Activated CD8-positive, alpha-beta T cell treated with anti-CD3 and anti-CD28 coated beads for 36 hours (primary cell): ENCODE measurements at regions of chr18 and their contacts with region 1.

Region 1: GRCh38 chr18:77000527-77000926 is 132.1 kb downstream of the MBP start:
- DNase-seq: peak; percentile 49
- ATAC-seq: peak; percentile 61
- H3K4me3 Mint-ChIP-seq: no peak overlapping the region
- H3K27ac Mint-ChIP-seq: no peak overlapping the region
- H3K4me1 Mint-ChIP-seq: peaks cover 19% of the 10 kb centered on the region
- H3K27me3 Mint-ChIP-seq: no peaks in the 10 kb centered on the region
- CTCF ChIP-seq: peak; percentile 99

Region 2: DNA sequence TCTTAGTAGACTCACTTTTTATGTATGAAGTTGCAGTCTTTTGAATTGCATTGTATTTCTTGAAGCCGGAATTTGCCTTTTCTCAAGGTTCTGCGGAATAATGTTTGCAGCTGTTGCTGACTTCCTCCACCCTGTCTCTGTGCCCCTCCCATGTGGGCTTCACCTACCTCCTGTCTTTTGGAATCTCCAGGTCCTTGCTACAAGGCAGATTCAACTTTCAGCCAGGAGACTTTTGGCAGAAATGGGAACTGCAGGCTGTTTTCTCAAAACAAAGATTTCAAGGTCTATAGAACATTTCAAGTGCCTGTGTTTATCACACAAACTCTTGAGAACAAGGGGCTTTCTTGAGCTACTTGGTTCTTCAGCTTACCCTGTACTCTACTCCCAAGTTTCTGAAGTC is 152.6 kb before region 1 on chr18:
- CTCF ChIA-PET with region 1: no interaction called
- POLR2A ChIA-PET with region 1: no interaction called
- intact Hi-C with region 1: no loop called
- DNase-seq: no peak
- ATAC-seq: no peak
- H3K4me3 Mint-ChIP-seq: no peak overlapping the region
- H3K27ac Mint-ChIP-seq: no peak overlapping the region
- H3K4me1 Mint-ChIP-seq: peaks cover 19% of the 10 kb centered on the region
- H3K27me3 Mint-ChIP-seq: no peaks in the 10 kb centered on the region
- CTCF ChIP-seq: no peak

Region 3: DNA sequence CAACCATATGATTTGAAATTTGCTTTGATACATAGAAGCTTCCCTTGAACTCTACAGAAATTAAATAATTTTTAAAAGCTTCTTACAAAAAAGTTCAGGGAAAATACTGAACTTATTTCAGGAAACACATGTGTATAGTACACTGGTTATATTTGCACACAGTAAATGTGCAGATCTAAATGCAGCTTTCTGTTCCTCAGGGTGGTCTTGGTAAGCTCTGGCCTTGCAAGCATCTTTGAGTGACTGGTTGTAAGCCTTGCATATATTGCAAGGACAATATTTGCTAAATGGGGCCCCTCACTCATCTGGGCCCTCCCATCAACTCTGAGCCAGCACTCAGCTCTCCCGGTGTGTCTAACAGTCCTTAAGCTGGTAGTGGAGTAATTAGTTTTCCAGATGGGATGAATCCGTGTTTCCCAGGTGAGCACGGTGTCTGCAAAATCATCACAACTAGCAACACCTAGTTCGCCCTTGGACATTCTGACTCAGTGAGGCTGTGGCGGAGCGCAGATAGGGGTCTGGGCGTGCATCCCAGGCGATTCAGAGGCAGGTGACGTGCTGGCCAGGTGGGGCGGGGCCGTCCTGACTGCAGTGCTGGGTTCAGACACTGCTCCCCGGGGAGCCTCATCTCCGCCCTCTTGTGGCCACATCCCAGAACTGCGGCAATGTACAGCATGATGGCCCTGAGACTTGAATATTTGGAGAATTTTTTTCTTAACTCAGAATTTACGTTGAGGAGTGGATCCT is 17.5 kb before region 1 on chr18:
- CTCF ChIA-PET with region 1: interaction called, 51 read pairs
- POLR2A ChIA-PET with region 1: interaction called, 4 read pairs
- intact Hi-C with region 1: no loop called
- DNase-seq: peak; percentile 95
- ATAC-seq: peak; percentile 100
- H3K4me3 Mint-ChIP-seq: no peak overlapping the region
- H3K27ac Mint-ChIP-seq: no peak overlapping the region
- H3K4me1 Mint-ChIP-seq: peaks cover 6% of the 10 kb centered on the region
- H3K27me3 Mint-ChIP-seq: no peaks in the 10 kb centered on the region
- CTCF ChIP-seq: peak; percentile 87

Region 4: DNA sequence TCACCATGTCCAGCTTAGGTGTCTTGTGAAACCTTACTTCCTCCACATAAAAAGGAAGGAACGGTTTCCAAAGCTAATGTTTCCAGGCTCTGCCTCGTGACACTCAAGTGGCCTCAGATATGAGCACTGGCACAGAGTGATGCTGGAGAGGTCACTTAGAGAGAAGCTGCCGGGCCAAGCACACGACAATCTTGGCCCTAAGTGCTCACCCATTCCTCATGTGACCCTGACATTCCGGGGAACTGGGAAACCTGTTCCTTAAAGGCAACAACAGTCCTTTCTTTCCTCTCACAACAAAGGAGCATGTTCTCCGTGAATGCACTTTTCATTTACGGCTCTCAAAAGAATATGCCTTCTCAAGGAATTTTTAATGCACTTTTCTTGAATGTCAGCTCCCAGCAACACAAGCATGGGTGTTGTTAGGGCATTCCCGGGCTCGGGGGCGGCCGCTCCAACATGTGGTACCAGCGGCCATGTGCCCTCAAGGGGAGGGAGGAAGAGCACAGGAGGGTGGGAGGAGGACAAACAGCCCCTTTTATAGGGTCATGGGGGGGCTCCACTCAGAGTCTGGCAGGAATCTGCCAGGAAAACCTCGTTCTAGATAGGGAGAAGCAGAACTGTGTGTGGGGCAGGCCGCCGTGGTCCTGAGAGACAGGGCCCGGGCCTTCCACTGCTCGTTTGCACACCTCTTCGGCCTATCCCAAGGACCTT is 13.4 kb after region 1 on chr18:
- CTCF ChIA-PET with region 1: interaction called, 65 read pairs
- POLR2A ChIA-PET with region 1: interaction called, 3 read pairs
- intact Hi-C with region 1: no loop called
- DNase-seq: no peak
- ATAC-seq: no peak
- H3K4me3 Mint-ChIP-seq: no peak overlapping the region
- H3K27ac Mint-ChIP-seq: no peak overlapping the region
- H3K4me1 Mint-ChIP-seq: peaks cover 16% of the 10 kb centered on the region
- H3K27me3 Mint-ChIP-seq: no peaks in the 10 kb centered on the region
- CTCF ChIP-seq: no peak

Region 5: GRCh38 chr18:77047787-77048419 is 47.4 kb after region 1 on chr18:
- CTCF ChIA-PET with region 1: interaction called, 38 read pairs
- POLR2A ChIA-PET with region 1: interaction called, 3 read pairs
- intact Hi-C with region 1: loop called (anchors 5 kb)
- DNase-seq: no peak
- ATAC-seq: no peak
- H3K4me3 Mint-ChIP-seq: no peak overlapping the region
- H3K27ac Mint-ChIP-seq: peak overlapping the region; percentile 46
- H3K4me1 Mint-ChIP-seq: peaks cover 16% of the 10 kb centered on the region
- H3K27me3 Mint-ChIP-seq: no peaks in the 10 kb centered on the region
- CTCF ChIP-seq: no peak

Region 6: DNA sequence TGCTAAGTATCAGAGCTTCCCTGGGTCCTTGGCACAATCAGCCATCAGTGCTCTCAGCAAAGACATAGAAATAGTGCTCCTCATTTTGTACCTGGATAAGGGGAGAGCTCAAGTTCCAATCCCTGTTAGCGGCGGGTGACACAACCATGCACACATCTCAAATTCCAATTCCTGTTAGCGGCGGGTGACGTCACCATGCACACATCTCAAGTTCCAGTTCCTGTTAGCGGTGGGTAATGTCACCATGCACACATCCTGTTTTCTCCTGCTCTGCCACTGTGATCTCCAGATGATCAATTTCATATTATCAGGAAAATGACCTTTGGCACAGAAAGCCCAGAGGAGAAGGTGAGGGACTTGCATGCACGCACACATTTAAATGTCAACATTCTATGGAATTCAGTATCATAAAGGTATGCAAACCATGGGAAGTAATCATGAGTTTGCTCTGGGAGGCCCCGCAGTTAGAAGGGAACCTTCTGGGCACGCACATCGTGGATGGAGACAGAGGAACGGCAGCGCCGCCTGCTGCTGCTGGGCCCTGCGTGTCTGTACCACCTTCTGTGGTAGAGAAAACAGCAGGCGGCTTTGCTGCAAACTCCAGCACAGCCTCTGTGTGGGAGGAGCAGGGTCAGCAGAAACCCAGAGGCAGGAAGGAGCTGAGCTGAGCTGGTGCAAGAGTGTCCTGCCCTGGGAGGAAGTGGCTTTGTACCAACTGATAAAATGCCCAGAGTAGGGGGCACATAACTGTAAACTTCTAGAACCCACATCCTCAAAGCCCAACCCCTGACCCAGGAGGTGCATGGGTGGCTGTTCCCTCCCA is 54.3 kb after region 1 on chr18:
- CTCF ChIA-PET with region 1: interaction called, 38 read pairs
- POLR2A ChIA-PET with region 1: interaction called, 3 read pairs
- intact Hi-C with region 1: loop called (anchors 5 kb)
- DNase-seq: peak; percentile 92
- ATAC-seq: peak; percentile 85
- H3K4me3 Mint-ChIP-seq: peak overlapping the region; percentile 79
- H3K27ac Mint-ChIP-seq: peak overlapping the region; percentile 93
- H3K4me1 Mint-ChIP-seq: peaks cover 57% of the 10 kb centered on the region
- H3K27me3 Mint-ChIP-seq: no peaks in the 10 kb centered on the region
- CTCF ChIP-seq: peak; percentile 42

Region 7: DNA sequence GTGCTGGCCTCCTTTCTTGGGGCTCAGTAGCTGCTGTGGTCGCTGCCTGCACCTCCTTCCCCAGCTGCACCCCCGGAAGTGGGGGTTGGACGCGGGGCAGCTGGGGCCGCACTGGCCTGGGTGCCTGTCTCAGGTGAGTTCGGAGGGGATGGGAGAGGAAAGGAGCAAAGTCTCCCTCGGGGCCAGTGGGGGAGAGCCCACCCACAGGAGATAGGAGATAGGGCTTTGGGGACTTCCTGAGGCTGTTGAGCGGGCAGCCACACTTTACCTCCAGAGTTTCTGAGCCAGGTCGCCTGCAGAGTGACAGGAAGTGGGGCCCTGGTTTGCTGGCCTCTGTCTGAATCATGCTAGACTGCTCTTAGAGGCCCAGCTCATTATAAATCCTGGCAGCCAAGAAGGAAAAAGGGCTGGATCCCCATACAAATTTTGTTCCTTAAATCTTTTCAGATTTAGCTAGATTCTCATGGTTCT is 124.0 kb after region 1 on chr18:
- CTCF ChIA-PET with region 1: interaction called, 21 read pairs
- POLR2A ChIA-PET with region 1: no interaction called
- intact Hi-C with region 1: no loop called
- DNase-seq: peak; percentile 84
- ATAC-seq: peak; percentile 89
- H3K4me3 Mint-ChIP-seq: peak overlapping the region; percentile 79
- H3K27ac Mint-ChIP-seq: peak overlapping the region; percentile 98
- H3K4me1 Mint-ChIP-seq: peaks cover 89% of the 10 kb centered on the region
- H3K27me3 Mint-ChIP-seq: no peaks in the 10 kb centered on the region
- CTCF ChIP-seq: no peak

Region 8: GRCh38 chr18:77207540-77207939 is 207.0 kb after region 1 on chr18:
- CTCF ChIA-PET with region 1: interaction called, 53 read pairs
- POLR2A ChIA-PET with region 1: no interaction called
- intact Hi-C with region 1: loop called (anchors 2 kb)
- DNase-seq: peak; percentile 69
- ATAC-seq: peak; percentile 78
- H3K4me3 Mint-ChIP-seq: no peak overlapping the region
- H3K27ac Mint-ChIP-seq: peak overlapping the region; percentile 36
- H3K4me1 Mint-ChIP-seq: peaks cover 40% of the 10 kb centered on the region
- H3K27me3 Mint-ChIP-seq: no peaks in the 10 kb centered on the region
- CTCF ChIP-seq: peak; percentile 68